GM12878 (cell line): ENCODE measurements at regions of chr17 and their contacts with region 1.

Region 1: GRCh38 chr17:56592487-56593085 is 913 bp upstream of the NOG start:
- DNase-seq: no peak
- ATAC-seq: peak; percentile 94
- H3K4me3 ChIP-seq: no peak overlapping the region
- H3K27ac ChIP-seq: no peak overlapping the region
- H3K4me1 ChIP-seq: no peaks in the 10 kb centered on the region
- H3K27me3 ChIP-seq: peaks cover 14 to 16% of the 10 kb centered on the region in 2 experiments
- CTCF ChIP-seq: peak; percentile 70 to 88 (median 82); a peak in 5 of 6 replicates
- EP300 ChIP-seq: no peak
- POLR2A ChIP-seq: no peak
- RAD21 ChIP-seq: peak; percentile 78

Region 2: DNA sequence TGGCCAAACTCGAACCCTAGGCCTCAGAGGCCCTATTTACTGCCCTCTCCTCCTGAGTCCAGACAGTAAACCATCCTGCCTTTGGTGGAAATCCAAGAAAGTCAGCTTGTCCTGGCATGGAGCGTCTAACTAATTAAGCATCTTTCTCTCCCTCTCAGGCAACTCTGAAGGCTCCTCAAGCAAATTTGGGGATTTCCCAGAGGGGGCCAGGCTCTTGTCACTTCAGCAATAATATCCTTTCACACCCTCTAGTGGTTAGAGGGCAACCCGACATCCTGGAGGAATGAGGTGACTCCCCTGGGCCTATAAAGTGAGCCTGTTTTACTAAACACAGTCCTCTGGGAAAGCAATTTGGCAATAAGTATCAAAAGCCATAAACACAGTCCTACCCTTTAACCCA is 61.3 kb after region 1 on chr17:
- CTCF ChIA-PET with region 1: interaction called, 3 read pairs
- POLR2A ChIA-PET with region 1: interaction called, 3 read pairs
- RAD21 ChIA-PET with region 1: no interaction called
- SMC1A ChIA-PET with region 1: no interaction called
- in situ Hi-C with region 1: no loop called
- intact Hi-C with region 1: loop called (anchors 1 kb)
- DNase-seq: peak; percentile 26
- ATAC-seq: peak; percentile 100
- H3K4me3 ChIP-seq: no peak overlapping the region
- H3K27ac ChIP-seq: no peak overlapping the region
- H3K4me1 ChIP-seq: no peaks in the 10 kb centered on the region
- H3K27me3 ChIP-seq: no peaks in the 10 kb centered on the region
- CTCF ChIP-seq: peak; percentile 72 to 74 (median 73)
- EP300 ChIP-seq: no peak
- POLR2A ChIP-seq: no peak
- RAD21 ChIP-seq: peak; percentile 67

Region 3: DNA sequence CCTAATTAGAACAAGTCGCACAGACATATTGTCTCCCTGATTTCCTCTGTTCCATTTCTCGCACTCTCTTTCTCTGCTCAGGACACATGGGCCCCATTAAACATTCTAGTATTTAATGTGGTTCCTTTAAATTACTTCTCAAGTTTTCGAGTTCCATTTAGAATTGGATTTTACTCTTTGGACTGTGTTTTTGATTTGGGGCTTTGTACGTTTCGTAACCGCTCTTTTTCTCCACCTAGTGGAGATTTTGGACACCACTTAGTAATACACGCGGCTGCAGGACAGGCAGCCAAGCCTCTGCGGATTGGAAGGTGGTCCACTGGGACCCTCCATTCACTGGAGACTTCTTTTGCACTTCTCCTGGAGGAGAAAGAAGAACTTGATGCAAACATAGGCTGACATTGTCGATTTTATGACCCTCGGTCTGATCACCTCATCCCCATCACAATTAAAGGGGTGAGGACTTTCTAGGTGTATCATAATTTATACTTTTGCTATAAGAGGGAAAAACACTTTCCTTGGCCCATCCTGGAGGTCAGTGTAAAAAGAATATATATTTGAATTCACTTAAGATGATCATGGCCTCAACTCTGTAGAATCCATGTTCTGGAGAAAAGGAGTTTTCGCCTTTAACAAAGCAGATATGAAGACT is 86.7 kb after region 1 on chr17:
- CTCF ChIA-PET with region 1: no interaction called
- POLR2A ChIA-PET with region 1: no interaction called
- RAD21 ChIA-PET with region 1: no interaction called
- SMC1A ChIA-PET with region 1: no interaction called
- in situ Hi-C with region 1: no loop called
- intact Hi-C with region 1: loop called (anchors 1 kb)
- DNase-seq: no peak
- ATAC-seq: peak; percentile 67
- H3K4me3 ChIP-seq: no peak overlapping the region
- H3K27ac ChIP-seq: no peak overlapping the region
- H3K4me1 ChIP-seq: peaks cover 6% of the 10 kb centered on the region; the same call in 1 of the 2 replicates
- H3K27me3 ChIP-seq: peaks cover 10 to 23% of the 10 kb centered on the region in 2 experiments
- CTCF ChIP-seq: peak; percentile 34 to 52 (median 37); a peak in 4 of 6 replicates
- EP300 ChIP-seq: no peak
- POLR2A ChIP-seq: no peak
- RAD21 ChIP-seq: peak; percentile 33; the same call in 1 of the 2 replicates

Region 4: DNA sequence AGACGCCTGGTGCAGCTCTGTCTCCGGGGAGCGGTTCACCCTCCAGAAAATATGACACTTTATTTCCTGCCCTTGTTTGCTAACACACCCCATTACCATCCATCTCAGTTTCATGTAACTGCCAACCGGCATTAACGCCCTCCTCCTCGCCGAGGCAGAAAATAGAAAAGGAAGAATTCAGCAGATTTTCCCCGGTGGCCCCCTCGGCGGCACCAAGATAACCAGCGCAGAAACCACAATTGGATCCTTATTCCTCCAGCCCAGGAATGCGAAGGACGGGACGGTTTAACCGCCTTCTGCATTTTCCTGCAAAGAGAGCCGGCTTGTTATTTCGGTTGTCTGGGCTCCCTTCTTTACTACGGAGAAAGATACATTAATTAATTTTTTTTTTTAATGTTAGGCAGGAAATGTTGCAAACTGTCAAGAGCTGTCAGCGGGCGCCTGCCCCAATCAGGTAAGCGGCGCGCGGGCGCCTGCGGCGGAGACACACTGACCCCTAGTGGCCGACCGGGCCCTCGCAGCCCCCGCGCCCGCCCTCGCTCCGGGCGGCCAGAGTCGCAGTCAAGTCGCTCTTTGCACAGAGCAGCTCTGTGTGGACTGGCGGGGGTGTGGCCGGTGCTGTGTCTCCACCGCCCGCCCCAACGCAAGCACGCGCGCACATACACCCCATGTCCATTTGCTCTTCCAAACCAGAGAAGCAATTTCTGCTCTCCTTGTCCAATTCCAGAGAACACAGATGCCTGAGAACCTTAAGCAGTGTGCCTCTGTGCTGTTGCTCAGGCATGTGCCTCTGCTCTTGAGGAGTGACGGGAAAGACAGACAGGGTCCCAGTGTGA is 187.5 kb after region 1 on chr17:
- CTCF ChIA-PET with region 1: interaction called, 9 read pairs
- POLR2A ChIA-PET with region 1: no interaction called
- RAD21 ChIA-PET with region 1: interaction called, 3 read pairs
- SMC1A ChIA-PET with region 1: interaction called, 3 read pairs
- in situ Hi-C with region 1: no loop called
- intact Hi-C with region 1: loop called (anchors 1 kb)
- DNase-seq: no peak
- ATAC-seq: peak; percentile 99
- H3K4me3 ChIP-seq: peak overlapping the region; percentile 39; the same call in 1 of the 2 replicates
- H3K27ac ChIP-seq: no peak overlapping the region
- H3K4me1 ChIP-seq: no peaks in the 10 kb centered on the region; the same call in 1 of the 2 replicates
- H3K27me3 ChIP-seq: peaks cover 2% of the 10 kb centered on the region in 2 experiments; a peak in 1 of 4 replicates
- CTCF ChIP-seq: peak; percentile 94 to 97 (median 95)
- EP300 ChIP-seq: no peak
- POLR2A ChIP-seq: no peak
- RAD21 ChIP-seq: peak; percentile 67